GM18951 (cell line): ENCODE measurements at regions of chr4 and their contacts with region 1.

Region 1: GRCh38 chr4:113555868-113556267 is 205.7 kb downstream of the CAMK2D start:
- POLR2A ChIP-seq: no peak

Region 2: DNA sequence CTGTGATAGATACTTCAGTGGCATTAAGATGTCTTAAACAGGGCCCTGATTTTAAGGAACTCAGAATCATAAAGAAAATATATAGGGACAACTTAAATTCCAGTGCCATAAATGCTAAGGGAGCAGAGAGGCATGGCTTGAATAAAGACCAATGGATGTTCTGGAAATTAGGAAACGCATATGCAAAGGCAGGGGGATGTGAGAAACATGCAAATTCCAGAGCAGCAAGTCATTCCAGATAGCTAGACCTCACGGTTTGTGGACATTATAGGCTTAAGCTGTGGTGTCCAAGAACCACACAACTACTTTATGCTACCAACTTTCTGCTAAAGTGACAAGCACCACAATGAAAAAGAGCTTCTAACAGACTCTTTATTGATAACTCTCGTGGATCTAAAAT is 639.0 kb before region 1 on chr4:
- in situ Hi-C with region 1: no loop called
- POLR2A ChIP-seq: no peak

Region 3: DNA sequence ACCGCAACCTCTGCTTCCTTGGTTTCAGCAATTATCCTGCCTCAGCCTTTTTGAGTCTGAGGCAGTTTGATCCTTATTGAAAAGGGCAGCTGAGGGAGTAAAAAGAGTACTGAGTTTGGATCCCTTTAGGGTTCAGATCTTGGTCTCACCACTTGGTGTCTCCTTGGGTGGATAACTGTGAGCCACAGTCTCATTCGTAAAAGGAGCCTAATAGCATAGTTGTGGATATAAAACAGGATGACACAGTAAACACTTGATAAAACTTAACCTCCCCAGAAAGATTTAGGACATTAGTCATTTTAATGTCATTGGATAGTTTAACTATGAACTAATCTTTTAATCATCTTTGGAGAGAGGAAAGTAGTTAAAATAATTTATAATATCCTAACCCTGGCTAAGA is 333.4 kb before region 1 on chr4:
- in situ Hi-C with region 1: no loop called
- POLR2A ChIP-seq: no peak

Region 4: GRCh38 chr4:113756005-113756410 is 200.1 kb after region 1 on chr4:
- in situ Hi-C with region 1: loop called (anchors 10 kb)
- POLR2A ChIP-seq: no peak

Region 5: DNA sequence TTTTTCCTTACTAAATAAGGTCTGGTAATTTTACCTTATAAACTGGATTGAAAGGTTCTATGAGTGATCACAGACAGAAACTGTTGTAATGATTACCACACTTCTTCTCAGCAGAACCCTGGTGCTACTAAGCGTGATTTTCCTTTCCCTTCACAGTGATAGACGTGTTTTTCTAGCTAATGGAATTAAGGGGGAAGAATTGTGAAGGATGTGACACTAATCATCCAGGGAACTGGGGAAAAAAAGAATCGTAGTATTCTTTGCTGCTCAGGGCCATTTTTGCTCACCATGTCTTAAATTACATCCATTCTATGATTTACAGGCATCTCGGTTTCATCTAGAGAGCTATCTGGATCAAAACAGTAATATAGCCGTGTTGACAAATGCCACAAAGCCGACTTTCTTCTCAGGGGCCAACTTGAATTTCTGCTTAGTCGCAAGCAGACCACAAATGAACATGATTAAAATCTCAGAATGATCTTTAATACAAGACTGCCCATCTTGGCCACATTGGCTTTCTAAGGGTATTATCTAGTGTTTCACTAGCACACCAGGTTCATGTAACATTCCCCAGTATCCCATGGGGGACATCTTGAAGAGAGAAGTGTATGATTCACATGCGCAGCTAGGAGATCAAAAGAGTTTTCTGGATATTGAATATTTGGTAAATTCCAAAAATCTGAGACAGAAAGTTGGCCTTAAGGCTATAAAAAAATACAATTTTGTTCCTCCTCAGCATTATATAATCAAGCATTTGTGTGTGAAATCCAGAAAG is 1196.7 kb after region 1 on chr4:
- in situ Hi-C with region 1: no loop called
- POLR2A ChIP-seq: no peak